Calu3 (cell line): ENCODE measurements at regions of chr20 and their contacts with region 1.

Region 1: DNA sequence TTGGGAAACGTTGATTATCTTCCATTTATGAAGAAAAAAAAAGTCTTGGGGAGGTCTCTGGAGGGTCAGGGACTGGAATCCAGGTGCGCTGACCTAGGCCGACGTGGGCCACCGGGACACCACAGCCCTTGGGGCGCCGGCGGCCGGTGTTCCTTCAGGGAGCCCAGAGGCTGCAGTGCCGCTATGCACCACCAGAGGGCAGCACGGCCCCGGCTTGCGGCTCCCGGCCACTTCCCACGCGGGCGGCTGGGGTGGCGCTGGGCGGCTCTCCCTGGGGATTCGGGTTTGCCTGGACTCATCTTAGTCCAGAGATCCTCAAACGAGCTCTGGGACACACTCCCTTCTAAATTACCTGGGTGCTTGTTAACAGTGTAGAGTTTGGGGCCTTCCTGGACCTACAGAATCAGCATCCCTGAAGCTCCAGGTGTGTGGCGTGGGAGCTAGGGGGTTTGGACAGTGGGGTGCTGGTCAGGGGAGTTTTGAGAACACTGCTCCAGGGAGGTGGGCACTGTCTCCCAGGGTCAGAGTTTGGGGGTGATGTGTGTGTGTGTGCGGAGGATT is 23.0 kb upstream of the GTSF1L start:
- DNase-seq: peak; percentile 97
- H3K4me3 Mint-ChIP-seq: no peak overlapping the region
- H3K27ac Mint-ChIP-seq: no peak overlapping the region
- H3K4me1 Mint-ChIP-seq: peaks cover 10% of the 10 kb centered on the region
- H3K27me3 Mint-ChIP-seq: peaks cover 62% of the 10 kb centered on the region
- CTCF ChIP-seq: peak; percentile 100

Region 2: GRCh38 chr20:43448748-43449535 is 300.9 kb before region 1 on chr20:
- CTCF ChIA-PET with region 1: no interaction called
- intact Hi-C with region 1: loop called (anchors 1 kb)
- DNase-seq: peak; percentile 62
- H3K4me3 Mint-ChIP-seq: no peak overlapping the region
- H3K27ac Mint-ChIP-seq: no peak overlapping the region
- H3K4me1 Mint-ChIP-seq: peaks cover 8% of the 10 kb centered on the region
- H3K27me3 Mint-ChIP-seq: peaks cover 68% of the 10 kb centered on the region
- CTCF ChIP-seq: peak; percentile 92

Region 3: GRCh38 chr20:43681468-43681942 is 68.3 kb before region 1 on chr20:
- CTCF ChIA-PET with region 1: no interaction called
- intact Hi-C with region 1: no loop called
- DNase-seq: no peak
- H3K4me3 Mint-ChIP-seq: no peak overlapping the region
- H3K27ac Mint-ChIP-seq: no peak overlapping the region
- H3K4me1 Mint-ChIP-seq: no peaks in the 10 kb centered on the region
- H3K27me3 Mint-ChIP-seq: no peaks in the 10 kb centered on the region
- CTCF ChIP-seq: no peak

Region 4: GRCh38 chr20:43721429-43722152 is 28.2 kb before region 1 on chr20:
- CTCF ChIA-PET with region 1: no interaction called
- intact Hi-C with region 1: no loop called
- DNase-seq: peak; percentile 22
- H3K4me3 Mint-ChIP-seq: no peak overlapping the region
- H3K27ac Mint-ChIP-seq: no peak overlapping the region
- H3K4me1 Mint-ChIP-seq: no peaks in the 10 kb centered on the region
- H3K27me3 Mint-ChIP-seq: peaks cover 6% of the 10 kb centered on the region
- CTCF ChIP-seq: no peak

Region 5: GRCh38 chr20:43840382-43841070 is 90.7 kb after region 1 on chr20:
- CTCF ChIA-PET with region 1: interaction called, 3 read pairs
- intact Hi-C with region 1: loop called (anchors 10 kb)
- DNase-seq: peak; percentile 42
- H3K4me3 Mint-ChIP-seq: no peak overlapping the region
- H3K27ac Mint-ChIP-seq: no peak overlapping the region
- H3K4me1 Mint-ChIP-seq: no peaks in the 10 kb centered on the region
- H3K27me3 Mint-ChIP-seq: peaks cover 88% of the 10 kb centered on the region
- CTCF ChIP-seq: peak; percentile 67